ENCODE measurements at regions of chr2 and their contacts with region 1.

Region 1: GRCh38 chr2:221573430-221574230 is 1.5 kb upstream of the EPHA4 start:
- DNase-seq: peak; percentile 86
- H3K4me3 Mint-ChIP-seq: peak overlapping the region; percentile 81
- H3K27ac Mint-ChIP-seq: no peak overlapping the region
- H3K4me1 Mint-ChIP-seq: peaks cover 29% of the 10 kb centered on the region
- H3K27me3 Mint-ChIP-seq: peaks cover 35% of the 10 kb centered on the region

Region 2: GRCh38 chr2:220687231-220687843 is 886.3 kb before region 1 on chr2:
- CTCF ChIA-PET with region 1: interaction called, 12 read pairs
- POLR2A ChIA-PET with region 1: no interaction called
- intact Hi-C with region 1: loop called (anchors 1 kb)
- DNase-seq: peak; percentile 74
- H3K4me3 Mint-ChIP-seq: no peak overlapping the region
- H3K27ac Mint-ChIP-seq: no peak overlapping the region
- H3K4me1 Mint-ChIP-seq: no peaks in the 10 kb centered on the region
- H3K27me3 Mint-ChIP-seq: peaks cover 11% of the 10 kb centered on the region

Region 3: GRCh38 chr2:220913384-220913783 is 660.2 kb before region 1 on chr2:
- CTCF ChIA-PET with region 1: no interaction called
- POLR2A ChIA-PET with region 1: no interaction called
- intact Hi-C with region 1: no loop called
- DNase-seq: no peak
- H3K4me3 Mint-ChIP-seq: no peak overlapping the region
- H3K27ac Mint-ChIP-seq: no peak overlapping the region
- H3K4me1 Mint-ChIP-seq: no peaks in the 10 kb centered on the region
- H3K27me3 Mint-ChIP-seq: no peaks in the 10 kb centered on the region

Region 4: GRCh38 chr2:221304916-221305315 is 268.7 kb before region 1 on chr2:
- CTCF ChIA-PET with region 1: no interaction called
- POLR2A ChIA-PET with region 1: no interaction called
- intact Hi-C with region 1: loop called (anchors 5 kb)
- DNase-seq: no peak
- H3K4me3 Mint-ChIP-seq: no peak overlapping the region
- H3K27ac Mint-ChIP-seq: no peak overlapping the region
- H3K4me1 Mint-ChIP-seq: no peaks in the 10 kb centered on the region
- H3K27me3 Mint-ChIP-seq: no peaks in the 10 kb centered on the region

Region 5: GRCh38 chr2:221465776-221466175 is 107.9 kb before region 1 on chr2:
- CTCF ChIA-PET with region 1: interaction called, 7 read pairs
- POLR2A ChIA-PET with region 1: no interaction called
- intact Hi-C with region 1: loop called (anchors 5 kb)
- DNase-seq: peak; percentile 14
- H3K4me3 Mint-ChIP-seq: no peak overlapping the region
- H3K27ac Mint-ChIP-seq: no peak overlapping the region
- H3K4me1 Mint-ChIP-seq: peaks cover 57% of the 10 kb centered on the region
- H3K27me3 Mint-ChIP-seq: no peaks in the 10 kb centered on the region

Region 6: DNA sequence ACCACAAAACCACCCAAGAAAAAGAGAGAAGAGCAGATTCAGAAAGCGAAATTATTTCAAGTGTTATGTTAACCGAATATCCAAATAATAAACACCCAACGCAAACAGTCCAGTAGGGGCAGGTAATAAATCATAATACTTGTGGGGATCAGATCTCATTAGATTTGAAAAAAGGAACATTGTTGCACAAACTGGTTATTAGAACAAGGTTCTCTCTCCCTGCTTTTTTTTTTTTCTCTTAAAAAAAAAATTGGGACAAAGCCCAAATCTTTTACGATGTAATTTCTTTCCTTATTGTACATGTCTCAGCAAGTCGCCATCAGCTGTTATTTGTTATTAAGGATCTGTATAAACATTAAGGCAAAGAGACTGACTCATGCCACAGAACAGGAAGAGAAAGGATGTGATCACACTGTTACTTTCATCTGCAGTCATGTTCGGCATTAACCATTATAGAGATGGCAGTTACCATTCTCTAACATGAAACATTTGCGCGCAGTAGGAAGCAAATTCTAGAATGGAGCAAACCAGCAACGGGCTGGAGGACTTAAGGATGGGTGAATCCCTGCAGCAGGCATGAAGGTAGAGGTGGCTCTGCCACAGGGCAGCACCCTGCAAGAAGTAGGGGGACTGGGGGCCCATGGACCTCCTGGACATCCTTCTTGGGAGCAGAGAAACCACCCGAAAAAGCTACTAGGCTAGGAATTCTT is 43.5 kb before region 1 on chr2:
- CTCF ChIA-PET with region 1: interaction called, 3 read pairs
- POLR2A ChIA-PET with region 1: interaction called, 3 read pairs
- intact Hi-C with region 1: loop called (anchors 2 kb)
- DNase-seq: no peak
- H3K4me3 Mint-ChIP-seq: peak overlapping the region; percentile 68
- H3K27ac Mint-ChIP-seq: peak overlapping the region; percentile 82
- H3K4me1 Mint-ChIP-seq: peaks cover 61% of the 10 kb centered on the region
- H3K27me3 Mint-ChIP-seq: no peaks in the 10 kb centered on the region

Region 7: DNA sequence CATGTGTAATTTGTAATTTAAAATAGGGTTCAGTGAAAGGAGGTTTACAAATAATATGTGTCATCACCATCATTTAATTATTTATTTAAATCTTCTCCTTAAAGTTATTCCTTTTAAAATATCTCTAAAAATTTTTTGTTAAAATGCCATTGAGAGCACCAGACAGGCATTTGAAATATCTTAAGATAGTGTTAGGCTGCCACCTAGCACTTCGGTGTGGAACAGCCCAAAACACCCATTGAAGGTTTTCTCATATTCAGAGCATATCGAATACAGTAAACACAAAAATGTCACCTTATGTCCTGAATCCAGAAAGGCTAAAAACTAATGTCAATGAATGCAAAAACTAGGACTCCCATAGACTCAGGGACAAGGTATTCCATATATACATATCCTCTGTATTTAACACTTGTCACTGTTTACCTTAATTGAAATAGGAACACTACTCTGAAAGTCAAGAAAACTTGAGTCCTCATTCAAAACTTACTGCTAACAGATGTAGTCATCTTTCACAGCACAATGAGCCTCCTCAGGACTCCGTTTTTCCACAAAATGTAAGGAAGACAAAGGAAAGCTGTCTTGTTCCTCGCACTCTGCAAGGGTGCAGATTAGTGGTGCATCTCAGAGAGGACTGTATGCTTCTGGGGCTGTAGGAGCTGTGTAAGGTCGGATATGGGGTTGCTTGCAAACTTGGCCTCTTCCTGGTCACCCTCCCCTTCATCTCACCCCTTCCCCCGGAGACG is 395.6 kb after region 1 on chr2:
- CTCF ChIA-PET with region 1: no interaction called
- POLR2A ChIA-PET with region 1: no interaction called
- intact Hi-C with region 1: loop called (anchors 5 kb)
- DNase-seq: peak; percentile 13
- H3K4me3 Mint-ChIP-seq: no peak overlapping the region
- H3K27ac Mint-ChIP-seq: no peak overlapping the region
- H3K4me1 Mint-ChIP-seq: no peaks in the 10 kb centered on the region
- H3K27me3 Mint-ChIP-seq: peaks cover 7% of the 10 kb centered on the region

Measured in activated CD4-positive, alpha-beta memory T cell treated with anti-CD3 and anti-CD28 coated beads for 36 hours (primary cell).